GM12878 (cell line): ENCODE measurements at regions of chr15 and their contacts with region 1.

Region 1: DNA sequence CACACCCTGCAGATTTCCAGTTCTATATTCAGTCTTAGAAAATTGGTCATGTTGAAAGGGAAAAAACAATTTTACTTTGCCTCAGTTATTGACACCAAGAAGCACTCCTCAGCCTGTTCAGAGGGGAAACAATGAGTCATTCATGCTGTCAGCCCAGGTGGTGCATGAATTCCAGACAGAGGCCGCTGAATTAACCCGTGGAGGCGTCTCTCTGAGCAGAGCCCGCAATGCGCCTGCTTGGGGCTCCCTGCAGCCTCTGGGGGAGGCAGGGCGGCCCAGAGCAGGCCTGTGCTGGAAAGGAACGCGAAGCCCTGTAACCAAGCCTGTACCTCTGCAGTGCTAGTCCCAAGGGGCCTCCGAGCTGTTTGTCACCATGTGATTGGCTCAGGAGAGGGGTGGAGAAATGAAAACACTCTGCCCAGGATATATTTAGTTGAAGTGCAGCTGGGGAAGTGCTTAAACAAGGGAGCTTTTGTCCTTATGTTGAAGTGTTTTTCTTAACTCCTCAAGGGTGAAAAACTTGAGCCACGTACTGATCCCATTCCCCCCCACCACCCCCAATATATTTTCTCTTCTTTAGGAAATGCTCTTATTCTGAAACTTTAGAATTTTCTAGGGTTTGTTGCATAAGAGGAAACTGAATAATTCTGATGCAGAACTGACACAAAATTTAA is 68.3 kb upstream of the CHD2 start:
- DNase-seq: peak; percentile 98
- ATAC-seq: peak; percentile 96
- H3K4me3 ChIP-seq: peak overlapping the region; percentile 58
- H3K27ac ChIP-seq: peak overlapping the region; percentile 95
- H3K4me1 ChIP-seq: peaks cover 41% of the 10 kb centered on the region
- H3K27me3 ChIP-seq: no peaks in the 10 kb centered on the region
- CTCF ChIP-seq: no peak
- EP300 ChIP-seq: peak; percentile 59 to 67
- POLR2A ChIP-seq: peak; percentile 93
- RAD21 ChIP-seq: peak; percentile 22; the same call in 1 of the 2 replicates

Region 2: DNA sequence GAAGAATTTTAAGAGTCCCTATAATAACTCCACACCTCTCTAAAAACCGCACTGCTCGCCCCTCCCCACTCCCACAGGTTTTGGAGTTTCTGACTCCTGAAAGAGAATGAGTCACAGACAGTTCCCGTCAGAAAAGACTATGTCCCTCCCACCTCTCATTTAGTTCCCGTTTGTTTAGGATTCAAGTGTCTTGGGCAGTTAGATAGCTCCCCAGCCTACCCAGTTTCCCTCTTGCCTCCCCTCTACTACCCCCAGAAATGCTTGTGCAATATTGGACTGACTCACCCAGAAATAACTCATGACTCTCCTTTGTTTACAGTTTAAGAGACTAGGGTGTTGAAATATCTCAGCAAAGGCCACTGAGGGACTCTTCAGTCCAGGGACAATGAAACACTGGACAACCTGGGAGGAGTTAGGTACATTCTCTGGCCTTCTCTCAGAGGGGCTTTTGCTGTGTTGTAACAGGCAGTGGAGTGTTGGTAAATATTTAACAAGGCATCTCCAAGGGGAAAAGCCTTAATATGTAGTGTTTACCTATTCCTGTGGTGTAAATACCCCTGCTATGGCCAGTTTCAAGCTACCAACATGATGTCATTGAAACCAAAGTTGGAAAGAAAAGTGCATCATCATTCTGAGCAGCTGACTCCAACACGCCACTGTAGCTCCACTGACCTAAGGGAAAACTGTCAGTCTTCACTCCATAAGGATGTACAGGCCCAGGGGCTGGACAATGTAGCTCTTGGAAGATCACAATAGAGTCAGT is 27.8 kb before region 1 on chr15:
- CTCF ChIA-PET with region 1: interaction called, 54 read pairs
- POLR2A ChIA-PET with region 1: interaction called, 97 read pairs
- RAD21 ChIA-PET with region 1: interaction called, 135 read pairs
- SMC1A ChIA-PET with region 1: interaction called, 122 read pairs
- in situ Hi-C with region 1: no loop called
- intact Hi-C with region 1: loop called (anchors 1 kb)
- DNase-seq: peak; percentile 65
- ATAC-seq: peak; percentile 64
- H3K4me3 ChIP-seq: no peak overlapping the region
- H3K27ac ChIP-seq: peak overlapping the region; percentile 48
- H3K4me1 ChIP-seq: peaks cover 13% of the 10 kb centered on the region
- H3K27me3 ChIP-seq: no peaks in the 10 kb centered on the region
- CTCF ChIP-seq: no peak
- EP300 ChIP-seq: peak; percentile 72 to 81; a peak in 3 of 4 replicates
- POLR2A ChIP-seq: no peak
- RAD21 ChIP-seq: no peak

Region 3: DNA sequence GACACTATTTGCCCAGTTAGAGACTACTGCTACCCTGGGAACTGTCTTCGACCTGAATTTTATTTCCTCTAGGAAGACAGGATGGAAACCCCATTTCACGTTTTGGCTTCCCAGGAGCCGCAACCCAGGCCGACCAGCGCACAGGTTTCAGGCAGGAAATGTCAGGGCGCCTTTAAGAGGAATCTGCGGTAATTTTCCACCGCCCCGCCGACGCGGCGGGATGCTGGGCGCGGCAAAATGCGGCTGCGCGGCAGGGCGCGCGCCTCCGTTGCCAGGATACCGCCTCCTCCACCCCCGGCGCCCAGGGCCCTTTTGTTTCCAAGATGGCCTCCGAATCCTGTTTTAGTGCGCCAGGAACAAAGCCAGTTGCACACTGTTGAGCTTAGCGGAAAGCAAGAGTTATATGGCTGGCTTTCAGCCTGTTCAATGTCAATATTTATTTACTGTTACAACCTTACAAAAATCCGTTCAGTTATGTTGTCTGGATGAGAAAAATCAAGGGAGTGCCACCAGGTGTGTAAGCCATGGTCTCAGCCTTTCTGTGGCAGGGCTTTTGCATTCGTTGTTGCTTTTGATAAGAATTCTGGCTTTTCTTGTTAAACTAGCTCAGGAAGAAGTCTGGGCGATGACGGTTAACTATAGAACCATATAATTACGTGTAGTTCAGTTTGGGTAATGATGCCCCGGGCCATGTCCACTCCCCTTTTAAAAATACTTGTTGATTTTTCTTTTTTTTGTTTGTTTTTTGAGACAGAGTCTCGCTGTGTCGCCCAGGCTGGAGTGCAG is 11.4 kb before region 1 on chr15:
- CTCF ChIA-PET with region 1: interaction called, 41 read pairs
- POLR2A ChIA-PET with region 1: interaction called, 97 read pairs
- RAD21 ChIA-PET with region 1: interaction called, 37 read pairs
- SMC1A ChIA-PET with region 1: interaction called, 87 read pairs
- in situ Hi-C with region 1: no loop called
- intact Hi-C with region 1: loop called (anchors 1 kb)
- DNase-seq: no peak
- ATAC-seq: peak; percentile 94
- H3K4me3 ChIP-seq: peak overlapping the region; percentile 64
- H3K27ac ChIP-seq: peak overlapping the region; percentile 85
- H3K4me1 ChIP-seq: peaks cover 28% of the 10 kb centered on the region
- H3K27me3 ChIP-seq: no peaks in the 10 kb centered on the region
- CTCF ChIP-seq: no peak
- EP300 ChIP-seq: no peak
- POLR2A ChIP-seq: peak; percentile 59; the same call in 1 of the 2 replicates
- RAD21 ChIP-seq: no peak

Region 4: GRCh38 chr15:92853222-92853621 is 21.4 kb after region 1 on chr15:
- CTCF ChIA-PET with region 1: interaction called, 6 read pairs
- POLR2A ChIA-PET with region 1: no interaction called
- RAD21 ChIA-PET with region 1: interaction called, 7 read pairs
- SMC1A ChIA-PET with region 1: interaction called, 46 read pairs
- in situ Hi-C with region 1: no loop called
- intact Hi-C with region 1: no loop called
- DNase-seq: no peak
- ATAC-seq: peak; percentile 41
- H3K4me3 ChIP-seq: no peak overlapping the region
- H3K27ac ChIP-seq: peak overlapping the region; percentile 40
- H3K4me1 ChIP-seq: peaks cover 21% of the 10 kb centered on the region
- H3K27me3 ChIP-seq: no peaks in the 10 kb centered on the region
- CTCF ChIP-seq: no peak
- EP300 ChIP-seq: no peak
- POLR2A ChIP-seq: no peak
- RAD21 ChIP-seq: no peak

Region 5: DNA sequence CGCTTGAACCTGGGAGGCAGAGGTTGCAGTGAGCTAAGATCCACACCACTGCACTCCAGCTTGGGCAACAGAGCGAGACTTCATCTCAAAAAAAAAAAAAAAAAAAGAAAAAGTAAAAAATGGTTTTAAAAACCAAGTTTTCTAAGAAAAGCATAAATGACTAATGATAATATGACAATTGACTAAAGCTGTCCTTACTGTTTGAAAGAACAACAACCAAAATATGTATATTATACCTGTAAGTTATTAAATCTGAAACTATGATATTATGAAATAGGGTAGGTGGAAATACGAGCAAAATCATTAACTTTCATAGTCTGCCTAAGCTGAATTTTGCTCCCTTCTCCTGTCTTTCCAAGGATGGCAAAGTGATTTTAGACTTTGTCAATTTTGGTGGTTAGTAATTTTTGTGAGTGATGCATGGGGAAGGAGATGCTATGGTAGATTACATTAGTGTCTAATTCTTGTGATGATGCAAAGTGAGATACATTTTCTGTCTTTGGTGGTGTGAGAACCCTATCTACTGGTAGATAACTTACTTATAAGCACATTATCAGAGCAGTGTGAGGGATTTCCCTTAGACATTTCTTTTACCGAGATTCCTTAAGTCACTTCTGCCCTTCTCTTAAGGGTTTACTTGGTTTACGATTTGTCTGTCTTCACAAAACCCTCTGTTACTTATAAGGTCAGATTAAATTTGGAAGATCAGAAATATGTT is 57.8 kb after region 1 on chr15:
- CTCF ChIA-PET with region 1: interaction called, 3 read pairs
- POLR2A ChIA-PET with region 1: interaction called, 134 read pairs
- RAD21 ChIA-PET with region 1: interaction called, 121 read pairs
- SMC1A ChIA-PET with region 1: interaction called, 106 read pairs
- in situ Hi-C with region 1: no loop called
- intact Hi-C with region 1: no loop called
- DNase-seq: no peak
- ATAC-seq: peak; percentile 30
- H3K4me3 ChIP-seq: peak overlapping the region; percentile 13; the same call in 1 of the 2 replicates
- H3K27ac ChIP-seq: no peak overlapping the region
- H3K4me1 ChIP-seq: peaks cover 3% of the 10 kb centered on the region; the same call in 1 of the 2 replicates
- H3K27me3 ChIP-seq: no peaks in the 10 kb centered on the region
- CTCF ChIP-seq: no peak
- EP300 ChIP-seq: no peak
- POLR2A ChIP-seq: no peak
- RAD21 ChIP-seq: no peak

Region 6: GRCh38 chr15:92903941-92904831 is 72.4 kb after region 1 on chr15:
- CTCF ChIA-PET with region 1: interaction called, 15 read pairs
- POLR2A ChIA-PET with region 1: interaction called, 88 read pairs
- RAD21 ChIA-PET with region 1: interaction called, 33 read pairs
- SMC1A ChIA-PET with region 1: interaction called, 58 read pairs
- in situ Hi-C with region 1: no loop called
- intact Hi-C with region 1: loop called (anchors 1 kb)
- DNase-seq: peak; percentile 94
- ATAC-seq: peak; percentile 78
- H3K4me3 ChIP-seq: peak overlapping the region; percentile 95
- H3K27ac ChIP-seq: peak overlapping the region; percentile 98
- H3K4me1 ChIP-seq: peaks cover 13% of the 10 kb centered on the region
- H3K27me3 ChIP-seq: no peaks in the 10 kb centered on the region
- CTCF ChIP-seq: no peak
- EP300 ChIP-seq: peak in 1 of 2 experiments; percentile 49; a peak in 1 of 4 replicates
- POLR2A ChIP-seq: peak; percentile 93
- RAD21 ChIP-seq: no peak